GM12878 (cell line): ENCODE measurements at regions of chr18 and their contacts with region 1.

Region 1: GRCh38 chr18:77067291-77068061 is 65.1 kb downstream of the MBP start:
- DNase-seq: peak; percentile 59
- ATAC-seq: peak; percentile 68
- H3K4me3 ChIP-seq: peak overlapping the region; percentile 23; the same call in 1 of the 2 replicates
- H3K27ac ChIP-seq: peak overlapping the region; percentile 97
- H3K4me1 ChIP-seq: peaks cover 71% of the 10 kb centered on the region
- H3K27me3 ChIP-seq: no peaks in the 10 kb centered on the region
- CTCF ChIP-seq: peak; percentile 15 to 18 (median 16); a peak in 2 of 6 replicates
- EP300 ChIP-seq: no peak
- POLR2A ChIP-seq: no peak
- RAD21 ChIP-seq: no peak

Region 2: GRCh38 chr18:76923485-76924085 is 143.9 kb before region 1 on chr18:
- CTCF ChIA-PET with region 1: no interaction called
- POLR2A ChIA-PET with region 1: no interaction called
- RAD21 ChIA-PET with region 1: no interaction called
- SMC1A ChIA-PET with region 1: no interaction called
- in situ Hi-C with region 1: no loop called
- intact Hi-C with region 1: no loop called
- DNase-seq: no peak
- ATAC-seq: no peak
- H3K4me3 ChIP-seq: no peak overlapping the region
- H3K27ac ChIP-seq: no peak overlapping the region
- H3K4me1 ChIP-seq: peaks cover 9% of the 10 kb centered on the region
- H3K27me3 ChIP-seq: no peaks in the 10 kb centered on the region
- CTCF ChIP-seq: peak; percentile 34 to 49 (median 42); a peak in 3 of 6 replicates
- EP300 ChIP-seq: no peak
- POLR2A ChIP-seq: no peak
- RAD21 ChIP-seq: no peak

Region 3: GRCh38 chr18:77054606-77055428 is 12.7 kb before region 1 on chr18:
- CTCF ChIA-PET with region 1: interaction called, 28 read pairs
- POLR2A ChIA-PET with region 1: no interaction called
- RAD21 ChIA-PET with region 1: interaction called, 4 read pairs
- SMC1A ChIA-PET with region 1: interaction called, 9 read pairs
- in situ Hi-C with region 1: no loop called
- intact Hi-C with region 1: no loop called
- DNase-seq: peak; percentile 80
- ATAC-seq: peak; percentile 93
- H3K4me3 ChIP-seq: peak overlapping the region; percentile 53
- H3K27ac ChIP-seq: peak overlapping the region; percentile 88
- H3K4me1 ChIP-seq: peaks cover 46% of the 10 kb centered on the region
- H3K27me3 ChIP-seq: no peaks in the 10 kb centered on the region
- CTCF ChIP-seq: peak; percentile 73 to 78 (median 75)
- EP300 ChIP-seq: peak; percentile 70 to 74
- POLR2A ChIP-seq: no peak; the same call in 1 of the 2 replicates
- RAD21 ChIP-seq: peak; percentile 58